CD14-positive monocyte (primary cell): ENCODE measurements at regions of chr2 and their contacts with region 1.

Region 1: GRCh38 chr2:190904640-190905261 is 24.1 kb downstream of the GLS start:
- DNase-seq: no peak
- H3K4me3 ChIP-seq: no peak overlapping the region
- H3K4me3 Mint-ChIP-seq: no peak overlapping the region
- H3K27ac ChIP-seq: no peak overlapping the region
- H3K27ac Mint-ChIP-seq: no peak overlapping the region
- H3K4me1 ChIP-seq: no peaks in the 10 kb centered on the region
- H3K4me1 Mint-ChIP-seq: no peaks in the 10 kb centered on the region
- H3K27me3 ChIP-seq: no peaks in the 10 kb centered on the region
- H3K27me3 Mint-ChIP-seq: no peaks in the 10 kb centered on the region
- CTCF ChIP-seq: no peak

Region 2: GRCh38 chr2:190853531-190854383 is 51.0 kb before region 1 on chr2:
- intact Hi-C with region 1: loop called in 1 of 2 experiments (anchors 10 kb)
- DNase-seq: peak; percentile 18 to 64 (median 50)
- H3K4me3 ChIP-seq: no peak overlapping the region
- H3K4me3 Mint-ChIP-seq: no peak overlapping the region
- H3K27ac ChIP-seq: no peak overlapping the region
- H3K27ac Mint-ChIP-seq: peak overlapping the region in 2 of 7 donors; percentile 27 to 63
- H3K4me1 ChIP-seq: peaks cover 0 to 10% of the 10 kb centered on the region in 2 donors
- H3K4me1 Mint-ChIP-seq: peaks cover 18% of the 10 kb centered on the region
- H3K27me3 ChIP-seq: no peaks in the 10 kb centered on the region
- H3K27me3 Mint-ChIP-seq: peaks cover 1 to 2% (median 2%) of the 10 kb centered on the region in 3 donors
- CTCF ChIP-seq: no peak

Region 3: DNA sequence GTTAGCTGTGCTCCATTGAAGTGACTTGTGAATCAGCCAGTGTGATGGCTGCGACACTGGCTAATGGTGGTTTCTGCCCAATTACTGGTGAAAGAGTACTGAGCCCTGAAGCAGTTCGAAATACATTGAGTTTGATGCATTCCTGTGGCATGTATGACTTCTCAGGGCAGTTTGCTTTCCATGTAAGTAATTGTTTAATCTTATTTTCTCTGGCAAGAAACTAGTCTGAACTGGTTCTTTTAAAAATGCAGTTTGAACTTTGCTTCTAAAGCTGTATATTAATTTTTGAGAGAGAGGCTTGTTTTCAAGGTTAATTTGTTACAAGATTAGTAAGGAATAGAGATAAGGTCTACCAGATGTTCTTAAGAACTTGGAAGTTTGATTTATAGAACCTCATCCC is 22.6 kb after region 1 on chr2:
- intact Hi-C with region 1: no loop called
- DNase-seq: no peak
- H3K4me3 ChIP-seq: no peak overlapping the region
- H3K4me3 Mint-ChIP-seq: no peak overlapping the region
- H3K27ac ChIP-seq: no peak overlapping the region
- H3K27ac Mint-ChIP-seq: peak overlapping the region in 1 of 7 donors; percentile 42
- H3K4me1 ChIP-seq: no peaks in the 10 kb centered on the region
- H3K4me1 Mint-ChIP-seq: peaks cover 10% of the 10 kb centered on the region
- H3K27me3 ChIP-seq: no peaks in the 10 kb centered on the region
- H3K27me3 Mint-ChIP-seq: no peaks in the 10 kb centered on the region
- CTCF ChIP-seq: no peak

Region 4: GRCh38 chr2:190996338-190996946 is 91.7 kb after region 1 on chr2:
- intact Hi-C with region 1: loop called (anchors 10 kb)
- DNase-seq: peak in 2 of 3 donors; percentile 11 to 14
- H3K4me3 ChIP-seq: no peak overlapping the region
- H3K4me3 Mint-ChIP-seq: peak overlapping the region in 1 of 2 donors; percentile 21
- H3K27ac ChIP-seq: peak overlapping the region in 1 of 2 donors; percentile 60
- H3K27ac Mint-ChIP-seq: peak overlapping the region in 6 of 7 donors; percentile 36 to 90 (median 66)
- H3K4me1 ChIP-seq: peaks cover 6 to 11% of the 10 kb centered on the region in 2 donors
- H3K4me1 Mint-ChIP-seq: peaks cover 8% of the 10 kb centered on the region
- H3K27me3 ChIP-seq: no peaks in the 10 kb centered on the region
- H3K27me3 Mint-ChIP-seq: no peaks in the 10 kb centered on the region
- CTCF ChIP-seq: peak; percentile 33

Region 5: DNA sequence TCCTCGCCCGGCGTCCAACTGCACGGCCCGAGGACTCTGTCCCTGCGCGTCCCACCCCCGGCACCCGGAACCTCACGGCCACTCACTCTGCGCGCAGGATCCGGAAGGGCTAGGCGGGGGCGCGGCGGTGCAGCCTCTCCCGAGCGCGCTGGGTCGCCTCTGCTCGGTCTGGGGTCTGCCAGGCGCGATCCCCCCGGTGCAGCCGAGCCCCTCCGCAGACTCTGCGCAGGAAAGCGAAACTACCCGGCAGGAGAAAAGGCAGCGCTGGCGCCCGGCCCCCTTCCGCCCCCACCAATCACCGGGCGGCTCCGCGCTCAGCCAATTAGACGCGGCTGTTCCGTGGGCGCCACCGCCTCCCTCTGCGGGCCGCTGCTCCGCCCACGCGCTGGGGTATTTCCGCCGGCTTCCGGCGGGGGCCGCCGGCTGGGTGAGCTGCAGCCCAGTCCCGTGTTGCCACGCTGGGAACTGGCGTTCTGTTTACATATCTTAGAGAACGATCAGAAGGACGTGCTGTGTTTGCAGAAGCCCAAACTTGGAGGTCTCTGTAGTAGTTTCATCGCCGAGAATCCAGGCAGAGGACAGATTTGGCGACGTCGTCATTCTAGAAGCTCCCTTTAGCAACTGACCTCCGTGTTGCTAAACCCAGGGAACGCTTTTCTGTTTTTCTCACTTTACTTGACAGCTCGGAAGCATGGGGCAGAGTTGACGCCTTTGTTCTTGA is 109.3 kb after region 1 on chr2 and contains the start of gene STAT1:
- intact Hi-C with region 1: loop called in 1 of 2 experiments (anchors 10 kb)
- DNase-seq: peak; percentile 90 to 91 (median 91)
- H3K4me3 ChIP-seq: peak within 1 kb of the TSS; percentile 73 to 99 (median 81)
- H3K4me3 Mint-ChIP-seq: no peak within 1 kb of the TSS
- H3K27ac ChIP-seq: peak within 1 kb of the TSS; percentile 84 to 90
- H3K27ac Mint-ChIP-seq: no peak within 1 kb of the TSS
- H3K4me1 ChIP-seq: peaks cover 36 to 38% of the 10 kb centered on the region in 2 donors
- H3K4me1 Mint-ChIP-seq: peaks cover 10% of the 10 kb centered on the region
- H3K27me3 ChIP-seq: no peaks in the 10 kb centered on the region
- H3K27me3 Mint-ChIP-seq: peaks cover 0 to 2% (median 0%) of the 10 kb centered on the region in 3 donors
- CTCF ChIP-seq: no peak
- polyA plus RNA-seq, gene STAT1: 51.3 to 126 (median 110) TPM